Ovary (tissue), 10 donors: ENCODE measurements at regions of chr10 and their contacts with region 1.

Region 1: DNA sequence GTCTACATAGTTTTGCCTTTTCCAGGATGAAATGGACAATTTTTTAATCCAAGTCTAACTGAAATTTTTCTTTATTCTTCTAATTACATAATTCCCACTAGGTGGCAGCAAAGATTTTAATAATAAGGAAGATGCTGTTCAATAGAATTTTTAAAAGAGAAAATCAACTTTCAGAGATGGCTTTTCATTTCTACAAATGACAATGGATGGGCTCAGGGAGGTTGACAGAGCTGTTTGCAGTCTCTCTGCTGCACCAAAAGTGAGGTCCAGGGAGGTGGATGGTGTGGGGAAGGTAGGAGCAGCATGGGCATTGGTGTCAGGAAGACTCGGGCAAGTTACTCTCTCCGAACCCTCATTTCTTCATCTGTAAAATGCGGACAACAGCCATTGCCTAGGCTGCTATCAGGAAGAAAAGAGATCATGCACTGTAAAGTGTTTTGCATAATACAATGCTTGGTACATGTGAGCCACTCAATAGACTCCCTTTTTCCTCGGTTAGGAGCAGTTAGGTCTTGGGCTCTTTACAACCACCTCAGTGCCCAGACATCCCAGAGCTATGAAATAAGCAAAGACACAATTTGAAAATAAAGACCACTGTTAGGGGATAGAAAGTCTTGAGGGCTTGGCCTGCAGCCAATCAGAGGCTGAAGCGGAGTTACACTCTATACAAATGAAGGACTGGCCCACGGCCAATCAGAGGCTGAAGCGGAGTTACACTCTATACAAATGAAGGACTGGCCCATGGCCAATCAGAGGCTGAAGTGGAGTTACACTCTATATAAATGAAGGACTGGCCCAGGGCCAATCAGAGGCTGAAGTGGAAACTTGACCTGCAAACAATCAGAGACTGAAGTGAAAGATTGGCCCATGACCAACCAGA is 107.1 kb downstream of the ABLIM1 start:
- DNase-seq: peak; percentile 44 to 74 (median 63)
- H3K4me3 ChIP-seq: no peak overlapping the region
- H3K27ac ChIP-seq: no peak overlapping the region
- H3K4me1 ChIP-seq: peaks cover 2% of the 10 kb centered on the region
- H3K27me3 ChIP-seq: no peaks in the 10 kb centered on the region
- CTCF ChIP-seq: peak; percentile 51 to 60 (median 55)
- EP300 ChIP-seq: no peak
- POLR2A ChIP-seq: no peak

Region 2: GRCh38 chr10:114304017-114304570 is 246.9 kb before region 1 on chr10:
- intact Hi-C with region 1: loop called in 3 of 4 experiments (anchors 5 to 10 kb)
- DNase-seq: peak; percentile 88 to 93 (median 90)
- H3K4me3 ChIP-seq: peak overlapping the region; percentile 17
- H3K27ac ChIP-seq: peak overlapping the region in 1 of 2 donors; percentile 2
- H3K4me1 ChIP-seq: peaks cover 3% of the 10 kb centered on the region
- H3K27me3 ChIP-seq: no peaks in the 10 kb centered on the region
- CTCF ChIP-seq: peak; percentile 81 to 89 (median 85)
- EP300 ChIP-seq: no peak
- POLR2A ChIP-seq: no peak

Region 3: DNA sequence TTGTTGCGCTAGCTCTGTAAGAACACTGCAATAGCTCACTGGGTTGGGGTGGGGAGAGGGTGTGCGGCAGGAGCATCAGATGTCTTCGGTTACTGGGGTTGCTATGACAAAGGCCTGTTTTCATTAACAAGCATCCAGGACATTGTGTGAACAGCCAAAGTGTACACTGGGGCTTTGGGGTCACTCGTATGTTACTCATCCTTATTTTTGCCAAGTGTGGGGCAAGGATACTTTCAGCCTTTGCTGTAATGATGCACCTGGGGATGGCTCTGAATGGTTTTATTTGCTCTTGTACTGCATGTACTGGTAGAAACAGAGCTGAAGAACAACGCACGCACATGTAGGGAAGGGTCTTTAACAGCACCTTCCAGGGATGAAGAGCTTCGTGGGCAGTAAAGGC is 73.7 kb before region 1 on chr10:
- intact Hi-C with region 1: loop called in 1 of 4 experiments (anchors 5 kb)
- DNase-seq: peak; percentile 44 to 87 (median 77)
- H3K4me3 ChIP-seq: no peak overlapping the region
- H3K27ac ChIP-seq: peak overlapping the region; percentile 40 to 76
- H3K4me1 ChIP-seq: peaks cover 16% of the 10 kb centered on the region
- H3K27me3 ChIP-seq: no peaks in the 10 kb centered on the region
- CTCF ChIP-seq: no peak
- EP300 ChIP-seq: peak; percentile 43
- POLR2A ChIP-seq: peak; percentile 26

Region 4: GRCh38 chr10:114623661-114624294 is 72.8 kb after region 1 on chr10:
- intact Hi-C with region 1: no loop called
- DNase-seq: no peak
- H3K4me3 ChIP-seq: no peak overlapping the region
- H3K27ac ChIP-seq: no peak overlapping the region
- H3K4me1 ChIP-seq: peaks cover 7% of the 10 kb centered on the region
- H3K27me3 ChIP-seq: no peaks in the 10 kb centered on the region
- CTCF ChIP-seq: no peak
- EP300 ChIP-seq: no peak
- POLR2A ChIP-seq: no peak

Region 5: DNA sequence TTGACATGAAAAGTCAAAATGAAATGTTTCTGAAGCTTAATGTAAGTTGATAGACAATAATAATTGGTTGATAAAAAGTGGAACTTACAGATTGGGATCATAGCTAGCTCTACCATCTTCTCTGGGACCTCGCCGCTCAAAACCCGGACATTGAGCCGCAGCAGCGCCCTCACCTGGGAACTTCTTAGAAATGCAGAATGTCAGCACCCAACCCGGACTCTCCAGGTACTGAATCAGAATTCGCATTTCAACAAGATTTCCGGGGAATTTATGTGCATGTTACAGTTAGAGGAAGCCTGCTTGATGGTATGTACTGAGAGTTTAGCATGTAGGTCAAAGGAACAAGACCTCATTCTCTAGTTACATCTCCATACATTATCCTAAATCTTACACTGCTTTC is 143.8 kb after region 1 on chr10:
- intact Hi-C with region 1: loop called in 1 of 4 experiments (anchors 10 kb)
- DNase-seq: no peak
- H3K4me3 ChIP-seq: no peak overlapping the region
- H3K27ac ChIP-seq: no peak overlapping the region
- H3K4me1 ChIP-seq: no peaks in the 10 kb centered on the region
- H3K27me3 ChIP-seq: no peaks in the 10 kb centered on the region
- CTCF ChIP-seq: no peak
- EP300 ChIP-seq: no peak
- POLR2A ChIP-seq: no peak

Region 6: GRCh38 chr10:114754445-114755320 is 203.7 kb after region 1 on chr10:
- intact Hi-C with region 1: no loop called
- DNase-seq: no peak
- H3K4me3 ChIP-seq: no peak overlapping the region
- H3K27ac ChIP-seq: no peak overlapping the region
- H3K4me1 ChIP-seq: no peaks in the 10 kb centered on the region
- H3K27me3 ChIP-seq: no peaks in the 10 kb centered on the region
- CTCF ChIP-seq: no peak
- EP300 ChIP-seq: no peak
- POLR2A ChIP-seq: no peak

Region 7: GRCh38 chr10:114779803-114780609 is 229.0 kb after region 1 on chr10:
- intact Hi-C with region 1: loop called (anchors 5 to 10 kb)
- DNase-seq: no peak
- H3K4me3 ChIP-seq: no peak overlapping the region
- H3K27ac ChIP-seq: peak overlapping the region in 1 of 2 donors; percentile 13
- H3K4me1 ChIP-seq: peaks cover 3% of the 10 kb centered on the region
- H3K27me3 ChIP-seq: no peaks in the 10 kb centered on the region
- CTCF ChIP-seq: no peak
- EP300 ChIP-seq: no peak
- POLR2A ChIP-seq: no peak

Region 8: DNA sequence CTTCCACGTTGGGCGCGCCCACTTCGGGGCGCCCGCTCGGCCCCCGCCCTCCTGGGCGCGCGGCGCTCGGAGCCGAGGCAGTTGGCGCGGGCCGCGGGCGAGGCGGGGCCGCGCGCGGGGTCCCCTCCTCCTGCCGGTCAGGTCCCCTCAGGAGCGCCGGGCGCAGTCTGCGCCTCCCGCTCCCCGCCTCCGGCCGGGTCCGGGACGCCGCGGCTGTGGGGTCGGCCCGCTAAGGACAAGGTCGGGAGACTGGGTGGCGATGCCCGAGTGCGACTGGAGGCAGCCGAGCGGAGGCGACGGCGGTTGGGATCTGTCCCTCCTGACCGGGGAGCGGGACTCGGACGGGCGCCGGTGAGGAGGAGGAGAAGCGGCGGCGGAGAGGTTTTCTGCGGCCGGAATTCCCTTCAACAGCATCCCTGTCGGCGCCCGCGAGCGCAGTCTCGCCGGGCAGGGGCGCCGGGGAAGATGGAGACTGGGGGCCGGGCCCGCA is 542.3 kb after region 1 on chr10 and contains the start of gene ATRNL1:
- intact Hi-C with region 1: no loop called
- DNase-seq: peak in 4 of 5 donors; percentile 68 to 78 (median 68)
- H3K4me3 ChIP-seq: peak within 1 kb of the TSS; percentile 76
- H3K27ac ChIP-seq: peak within 1 kb of the TSS; percentile 88 to 99
- H3K4me1 ChIP-seq: no peaks in the 10 kb centered on the region
- H3K27me3 ChIP-seq: no peaks in the 10 kb centered on the region
- CTCF ChIP-seq: no peak
- EP300 ChIP-seq: no peak
- POLR2A ChIP-seq: peak; percentile 51
- total RNA-seq, gene ATRNL1: 54.7 to 119 (median 85.3) TPM

Region 9: GRCh38 chr10:115801992-115802391 is 1251.0 kb after region 1 on chr10:
- intact Hi-C with region 1: no loop called
- DNase-seq: no peak
- H3K4me3 ChIP-seq: no peak overlapping the region
- H3K27ac ChIP-seq: no peak overlapping the region
- H3K4me1 ChIP-seq: no peaks in the 10 kb centered on the region
- H3K27me3 ChIP-seq: no peaks in the 10 kb centered on the region
- CTCF ChIP-seq: no peak
- EP300 ChIP-seq: no peak
- POLR2A ChIP-seq: no peak